ENCODE measurements at regions of chr4 and their contacts with region 1.

Region 1: GRCh38 chr4:99563310-99564186 is at the start of gene TRMT10A:
- ATAC-seq: peak; percentile 95 to 98 (median 97)
- H3K4me3 ChIP-seq: peak within 1 kb of the TSS; percentile 71 to 93 (median 78)
- H3K27ac ChIP-seq: peak within 1 kb of the TSS; percentile 94 to 96
- H3K4me1 ChIP-seq: peaks cover 5 to 9% of the 10 kb centered on the region in 2 donors
- total RNA-seq, gene TRMT10A: 7.3 to 15.9 (median 11.7) TPM

Region 2: DNA sequence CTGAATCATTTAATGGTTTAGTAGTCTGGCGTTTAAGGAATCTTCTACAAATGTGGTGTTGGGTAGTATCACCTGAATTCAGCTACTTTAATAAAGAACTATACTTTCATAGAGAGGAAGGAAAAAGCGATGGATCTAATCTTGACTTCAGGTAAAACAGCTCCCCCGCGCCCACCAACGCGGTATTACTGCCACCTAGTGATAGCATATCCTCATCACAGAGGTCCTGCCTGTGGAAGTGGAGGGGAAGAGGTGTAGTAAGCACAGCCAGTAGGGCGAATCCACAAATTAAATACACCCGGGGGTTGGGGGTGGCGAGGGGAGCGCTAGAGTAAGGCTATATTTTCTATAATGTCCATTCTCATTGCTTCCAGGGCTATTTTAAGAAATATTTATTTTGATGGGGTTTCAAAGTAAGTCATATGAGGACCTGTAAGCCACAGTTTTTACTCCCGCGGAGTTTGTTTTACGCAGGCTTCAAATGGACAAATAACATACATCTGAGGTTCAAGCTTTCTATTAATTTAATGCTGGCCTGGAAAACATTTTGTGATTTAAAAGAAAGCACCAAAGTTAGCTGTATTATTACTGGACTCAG is 244.8 kb after region 1 on chr4:
- in situ Hi-C with region 1: loop called in 3 of 9 experiments (anchors 5 to 25 kb)
- ATAC-seq: peak; percentile 48 to 93 (median 73)
- H3K4me3 ChIP-seq: no peak overlapping the region
- H3K27ac ChIP-seq: no peak overlapping the region
- H3K4me1 ChIP-seq: peaks cover 6 to 16% of the 10 kb centered on the region in 2 donors

Measured in motor neuron (in vitro differentiated cells).